ENCODE measurements at regions of chrX and their contacts with region 1.

Region 1: DNA sequence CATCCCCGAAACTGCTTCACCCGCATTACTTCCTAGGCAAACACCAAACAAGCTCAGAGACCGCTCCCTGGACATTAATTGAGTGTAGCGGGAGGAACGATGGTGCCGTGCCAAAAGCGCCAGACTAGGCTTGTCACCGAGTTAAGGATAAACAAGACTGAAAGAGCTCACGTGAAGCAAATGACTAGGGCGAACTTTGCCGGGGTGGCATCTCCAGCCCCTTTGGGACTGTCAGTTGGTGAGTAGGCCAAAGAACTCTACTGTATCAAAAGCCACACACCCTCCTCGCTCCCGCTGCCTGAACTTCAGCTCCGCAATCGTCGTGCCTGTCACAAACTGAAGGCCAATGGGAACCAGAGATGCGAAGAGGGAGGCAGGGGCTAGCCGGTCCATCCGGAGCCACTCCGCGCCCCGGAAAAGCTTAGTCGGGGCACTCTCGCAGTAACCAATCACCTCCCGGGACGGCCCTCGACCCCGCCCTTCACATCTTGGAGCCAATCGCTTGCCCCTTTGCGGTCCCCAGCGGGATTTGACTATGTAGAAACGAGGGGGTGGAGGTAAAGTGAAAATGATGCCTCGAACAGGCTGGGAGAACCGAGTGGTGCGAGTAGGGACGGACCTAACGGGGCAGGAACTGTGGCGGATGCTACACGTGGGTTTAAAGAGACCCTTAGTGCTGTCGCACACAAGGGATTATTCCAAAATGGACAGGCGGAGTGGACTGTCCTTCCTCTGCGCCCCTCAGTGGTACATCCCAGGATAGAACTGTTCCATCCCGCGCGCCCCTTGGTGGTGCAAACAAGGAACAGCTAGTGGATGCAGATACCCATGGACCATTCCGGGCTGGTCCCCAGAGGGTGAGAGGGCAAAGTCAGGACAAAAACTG is 37.1 kb upstream of the FAM156A start:
- DNase-seq: peak; percentile 91
- ATAC-seq: peak; percentile 98
- H3K4me3 Mint-ChIP-seq: peak overlapping the region; percentile 90
- H3K27ac Mint-ChIP-seq: peak overlapping the region; percentile 96
- H3K4me1 Mint-ChIP-seq: peaks cover 13% of the 10 kb centered on the region
- H3K27me3 Mint-ChIP-seq: peaks cover 18% of the 10 kb centered on the region
- CTCF ChIP-seq: peak; percentile 25; the same call in 1 of the 2 replicates

Region 2: GRCh38 chrX:52981266-52981665 is 14.1 kb before region 1 on chrX:
- CTCF ChIA-PET with region 1: interaction called, 10 read pairs
- POLR2A ChIA-PET with region 1: no interaction called
- DNase-seq: no peak
- ATAC-seq: no peak
- H3K4me3 Mint-ChIP-seq: no peak overlapping the region
- H3K27ac Mint-ChIP-seq: no peak overlapping the region
- H3K4me1 Mint-ChIP-seq: peaks cover 13% of the 10 kb centered on the region
- H3K27me3 Mint-ChIP-seq: no peaks in the 10 kb centered on the region
- CTCF ChIP-seq: no peak

Region 3: DNA sequence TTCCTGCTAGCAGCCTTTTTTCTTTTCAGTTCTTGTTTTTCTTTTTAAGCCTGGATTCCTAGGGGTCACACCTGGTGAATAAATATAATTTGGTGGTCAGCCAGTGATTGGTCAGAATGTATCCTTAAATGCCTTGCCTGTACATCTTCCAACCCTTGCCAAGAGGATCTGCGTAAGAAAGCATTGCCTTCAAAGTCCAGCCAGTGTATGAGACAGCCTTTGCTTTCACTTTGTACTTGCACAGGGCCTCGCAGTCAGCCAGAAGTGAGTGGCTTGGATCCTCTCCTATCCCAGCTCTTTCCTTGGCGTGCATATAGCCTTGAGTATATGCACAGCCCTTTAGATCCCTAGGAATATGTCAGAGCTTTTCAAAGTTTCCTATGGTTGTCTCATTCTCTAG is 120.7 kb after region 1 on chrX:
- CTCF ChIA-PET with region 1: no interaction called
- POLR2A ChIA-PET with region 1: no interaction called
- DNase-seq: no peak
- ATAC-seq: no peak
- H3K4me3 Mint-ChIP-seq: no peak overlapping the region
- H3K27ac Mint-ChIP-seq: peak overlapping the region; percentile 10; the same call in 1 of the 2 replicates
- H3K4me1 Mint-ChIP-seq: peaks cover 5% of the 10 kb centered on the region
- H3K27me3 Mint-ChIP-seq: no peaks in the 10 kb centered on the region
- CTCF ChIP-seq: no peak

Measured in WTC11 (cell line).